ENCODE measurements at regions of chr15 and their contacts with region 1.

Region 1: GRCh38 chr15:99704444-99704838 is 28.8 kb downstream of the LYSMD4 start:
- DNase-seq: peak; percentile 84
- H3K4me3 ChIP-seq: no peak overlapping the region
- H3K27ac ChIP-seq: no peak overlapping the region
- H3K27me3 ChIP-seq: no peaks in the 10 kb centered on the region
- CTCF ChIP-seq: peak; percentile 74

Region 2: DNA sequence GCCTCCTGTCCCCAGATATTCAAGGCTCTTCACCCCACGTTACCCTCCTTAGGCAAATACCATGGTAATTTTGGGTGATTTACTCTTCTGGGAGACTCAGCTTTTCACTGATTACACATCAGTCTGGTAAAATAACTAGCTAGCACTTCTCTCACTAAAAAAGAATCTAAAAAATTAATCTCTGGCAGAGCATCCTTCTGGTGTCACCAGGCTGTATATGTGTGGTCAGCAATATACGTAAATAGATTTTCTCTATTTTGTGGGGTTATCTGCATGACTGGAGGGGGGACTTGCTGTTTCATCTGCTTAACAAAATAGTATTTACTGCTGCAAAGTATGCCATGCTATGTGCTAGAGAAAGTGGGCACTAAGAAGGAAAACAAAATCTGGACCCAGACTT is 408.1 kb before region 1 on chr15:
- CTCF ChIA-PET with region 1: interaction called, 37 read pairs
- POLR2A ChIA-PET with region 1: no interaction called
- DNase-seq: no peak
- H3K4me3 ChIP-seq: no peak overlapping the region
- H3K27ac ChIP-seq: no peak overlapping the region
- H3K27me3 ChIP-seq: no peaks in the 10 kb centered on the region
- CTCF ChIP-seq: no peak

Region 3: DNA sequence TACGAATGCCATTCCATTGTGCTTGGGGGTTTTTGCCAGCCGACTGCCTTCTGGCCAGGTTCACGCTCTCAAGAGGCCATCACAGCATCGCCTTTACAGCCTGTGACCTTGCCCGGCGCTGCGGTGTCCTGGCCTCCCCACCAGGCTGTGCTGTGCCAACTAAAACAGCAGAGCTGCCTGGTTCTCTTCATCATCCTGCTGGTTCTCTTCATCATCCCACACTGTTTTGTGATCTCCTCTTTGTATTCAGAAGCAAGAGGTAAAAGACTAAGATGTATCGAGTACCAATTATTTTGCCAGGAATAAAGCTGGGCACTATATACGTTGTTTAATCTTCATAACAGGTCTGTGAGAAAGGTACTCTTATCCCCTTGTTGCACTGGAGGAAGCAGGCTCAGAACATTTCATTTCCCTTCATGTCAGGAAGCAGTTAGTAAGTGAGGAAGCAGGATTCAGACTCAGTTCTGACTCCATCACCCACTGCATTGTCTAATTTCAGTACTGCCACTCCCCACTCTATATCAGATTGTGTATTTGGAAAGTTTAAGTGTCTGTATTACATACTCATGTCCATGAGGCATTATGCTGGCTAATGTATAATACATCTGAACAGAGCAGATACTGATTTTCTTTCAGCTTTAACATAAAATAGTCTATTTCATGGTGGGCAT is 360.4 kb before region 1 on chr15:
- CTCF ChIA-PET with region 1: interaction called, 15 read pairs
- POLR2A ChIA-PET with region 1: interaction called, 10 read pairs
- DNase-seq: no peak
- H3K4me3 ChIP-seq: no peak overlapping the region
- H3K27ac ChIP-seq: no peak overlapping the region
- H3K27me3 ChIP-seq: no peaks in the 10 kb centered on the region
- CTCF ChIP-seq: peak; percentile 15; the same call in 1 of the 2 replicates

Region 4: GRCh38 chr15:99409097-99409473 is 295.4 kb before region 1 on chr15:
- CTCF ChIA-PET with region 1: interaction called, 74 read pairs
- POLR2A ChIA-PET with region 1: no interaction called
- DNase-seq: no peak
- H3K4me3 ChIP-seq: no peak overlapping the region
- H3K27ac ChIP-seq: no peak overlapping the region
- H3K27me3 ChIP-seq: no peaks in the 10 kb centered on the region
- CTCF ChIP-seq: peak; percentile 72

Region 5: GRCh38 chr15:99507504-99508310 is 196.7 kb before region 1 on chr15:
- CTCF ChIA-PET with region 1: interaction called, 13 read pairs
- POLR2A ChIA-PET with region 1: no interaction called
- DNase-seq: peak; percentile 73
- H3K4me3 ChIP-seq: peak overlapping the region; percentile 21; the same call in 1 of the 2 replicates
- H3K27ac ChIP-seq: peak overlapping the region; percentile 74
- H3K27me3 ChIP-seq: no peaks in the 10 kb centered on the region
- CTCF ChIP-seq: no peak

Region 6: GRCh38 chr15:99671926-99672635 is 32.4 kb before region 1 on chr15:
- CTCF ChIA-PET with region 1: interaction called, 18 read pairs
- POLR2A ChIA-PET with region 1: no interaction called
- DNase-seq: no peak
- H3K4me3 ChIP-seq: no peak overlapping the region
- H3K27ac ChIP-seq: no peak overlapping the region
- H3K27me3 ChIP-seq: no peaks in the 10 kb centered on the region
- CTCF ChIP-seq: no peak

Region 7: DNA sequence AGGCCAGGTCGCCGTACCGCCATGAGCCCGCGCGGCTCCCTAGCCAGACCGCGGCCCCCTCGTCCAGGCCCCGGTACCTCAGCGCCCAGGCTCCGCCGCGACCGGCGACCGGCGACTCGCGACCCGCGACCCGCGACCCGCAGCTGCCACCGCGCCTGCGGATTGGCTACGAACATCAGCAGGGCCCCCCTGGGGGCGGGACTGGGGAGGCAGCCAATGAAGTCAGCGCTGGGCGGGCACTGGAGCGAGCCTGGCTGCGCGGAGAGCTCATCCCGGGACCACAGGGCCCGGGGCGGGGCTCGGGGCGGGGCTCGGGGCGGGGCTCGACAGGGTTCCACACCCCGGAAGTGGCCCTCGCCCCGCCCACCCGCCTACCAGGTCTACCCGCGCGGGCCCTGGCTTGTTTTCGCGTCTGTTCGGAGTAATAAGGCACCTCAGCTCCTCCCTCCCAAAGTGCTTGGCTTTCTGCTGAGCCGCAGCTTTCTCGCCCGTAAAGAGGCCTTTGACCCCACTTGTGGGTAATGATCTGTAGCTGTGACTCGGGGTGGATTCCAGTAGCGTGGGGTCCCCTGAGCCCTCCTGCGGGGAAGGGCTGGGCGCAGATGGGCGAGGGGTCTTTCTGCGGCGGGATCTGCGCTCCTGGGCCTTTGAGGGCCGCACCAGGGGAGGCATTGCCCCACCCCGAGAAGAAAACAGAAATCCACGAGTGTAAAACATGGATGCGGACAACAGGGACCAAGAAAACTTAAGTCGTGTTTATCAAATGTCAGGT is 29.0 kb after region 1 on chr15 and contains the start of gene LYSMD4:
- CTCF ChIA-PET with region 1: interaction called, 54 read pairs
- POLR2A ChIA-PET with region 1: interaction called, 4 read pairs
- DNase-seq: peak; percentile 66
- H3K4me3 ChIP-seq: peak within 1 kb of the TSS; percentile 75
- H3K27ac ChIP-seq: peak within 1 kb of the TSS; percentile 57
- H3K27me3 ChIP-seq: peaks cover 3% of the 10 kb centered on the region
- CTCF ChIP-seq: no peak
- polyA plus RNA-seq, gene LYSMD4: 3.2 and 3.3 TPM in 2 replicates

Region 8: GRCh38 chr15:99857836-99858235 is 153.4 kb after region 1 on chr15:
- CTCF ChIA-PET with region 1: no interaction called
- POLR2A ChIA-PET with region 1: no interaction called
- DNase-seq: no peak
- H3K4me3 ChIP-seq: no peak overlapping the region
- H3K27ac ChIP-seq: no peak overlapping the region
- H3K27me3 ChIP-seq: no peaks in the 10 kb centered on the region
- CTCF ChIP-seq: no peak

Region 9: GRCh38 chr15:100141311-100142001 is 437.0 kb after region 1 on chr15:
- CTCF ChIA-PET with region 1: no interaction called
- POLR2A ChIA-PET with region 1: no interaction called
- DNase-seq: no peak
- H3K4me3 ChIP-seq: no peak overlapping the region
- H3K27ac ChIP-seq: no peak overlapping the region
- H3K27me3 ChIP-seq: no peaks in the 10 kb centered on the region
- CTCF ChIP-seq: no peak

Measured in AG04450 (cell line).